ENCODE measurements at regions of chr11 and their contacts with region 1.

Region 1: DNA sequence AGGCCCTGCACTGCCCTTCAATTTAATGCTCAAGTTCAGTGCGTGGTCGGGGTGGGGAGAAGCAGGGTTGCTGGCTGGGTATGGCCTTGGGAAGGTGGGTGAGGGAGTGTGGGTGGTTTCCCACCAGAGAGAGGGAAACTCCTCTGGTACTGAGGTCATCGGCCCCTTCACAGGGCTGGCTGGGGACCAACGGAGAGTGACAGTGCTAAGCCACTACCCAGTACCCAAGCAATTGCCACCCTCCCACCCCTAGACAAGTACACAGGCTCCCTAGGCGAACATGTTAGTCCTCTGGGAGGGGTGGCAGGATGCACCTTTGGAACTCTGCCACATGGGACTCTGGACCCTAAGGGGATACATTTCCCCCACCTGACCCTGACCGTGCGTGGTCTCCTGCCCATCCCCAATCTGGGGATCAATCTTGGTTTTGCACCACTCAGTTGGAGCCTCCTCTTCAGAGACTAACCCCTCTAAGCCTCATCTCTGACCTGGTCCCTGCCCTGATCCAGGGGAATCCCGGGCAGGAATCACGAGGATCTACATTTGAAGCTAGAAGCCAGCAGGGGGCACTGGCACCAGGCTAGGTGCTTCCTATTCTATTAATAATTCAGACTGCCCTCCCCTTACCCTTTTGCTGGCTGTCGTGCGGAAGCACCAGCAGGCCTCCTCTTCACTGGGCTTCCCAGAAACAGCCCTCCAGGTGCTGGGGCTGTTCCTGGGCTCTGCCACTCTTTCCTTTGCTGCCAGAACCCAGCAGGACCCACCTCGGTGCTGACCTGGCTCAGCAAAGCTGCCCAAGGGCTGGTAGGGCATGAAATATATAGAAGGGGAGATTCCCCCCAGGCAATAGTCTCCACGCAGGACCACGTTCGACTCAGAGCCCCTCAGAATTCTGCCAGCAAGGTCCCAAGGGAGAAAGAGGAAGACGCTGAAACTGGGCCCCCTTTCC is 377.7 kb downstream of the TENM4 start:
- DNase-seq: no peak
- ATAC-seq: peak in 3 of 4 donors; percentile 60 to 67 (median 61)
- H3K4me3 ChIP-seq: no peak overlapping the region
- H3K27ac ChIP-seq: no peak overlapping the region
- H3K4me1 ChIP-seq: peaks cover 0 to 3% (median 0%) of the 10 kb centered on the region in 12 donors
- H3K27me3 ChIP-seq: no peaks in the 10 kb centered on the region
- CTCF ChIP-seq: peak; percentile 10 to 56 (median 34)
- POLR2A ChIP-seq: no peak

Region 2: GRCh38 chr11:78961247-78961646 is 101.8 kb before region 1 on chr11:
- intact Hi-C with region 1: no loop called
- DNase-seq: peak in 1 of 5 donors; percentile 22
- ATAC-seq: peak in 3 of 4 donors; percentile 56 to 82 (median 68)
- H3K4me3 ChIP-seq: no peak overlapping the region
- H3K27ac ChIP-seq: no peak overlapping the region
- H3K4me1 ChIP-seq: peaks cover 0 to 10% (median under 1%) of the 10 kb centered on the region in 12 donors
- H3K27me3 ChIP-seq: peaks cover 0 to 29% (median 7%) of the 10 kb centered on the region in 9 donors
- CTCF ChIP-seq: peak in 10 of 12 donors; percentile 18 to 55 (median 43)
- POLR2A ChIP-seq: no peak

Region 3: DNA sequence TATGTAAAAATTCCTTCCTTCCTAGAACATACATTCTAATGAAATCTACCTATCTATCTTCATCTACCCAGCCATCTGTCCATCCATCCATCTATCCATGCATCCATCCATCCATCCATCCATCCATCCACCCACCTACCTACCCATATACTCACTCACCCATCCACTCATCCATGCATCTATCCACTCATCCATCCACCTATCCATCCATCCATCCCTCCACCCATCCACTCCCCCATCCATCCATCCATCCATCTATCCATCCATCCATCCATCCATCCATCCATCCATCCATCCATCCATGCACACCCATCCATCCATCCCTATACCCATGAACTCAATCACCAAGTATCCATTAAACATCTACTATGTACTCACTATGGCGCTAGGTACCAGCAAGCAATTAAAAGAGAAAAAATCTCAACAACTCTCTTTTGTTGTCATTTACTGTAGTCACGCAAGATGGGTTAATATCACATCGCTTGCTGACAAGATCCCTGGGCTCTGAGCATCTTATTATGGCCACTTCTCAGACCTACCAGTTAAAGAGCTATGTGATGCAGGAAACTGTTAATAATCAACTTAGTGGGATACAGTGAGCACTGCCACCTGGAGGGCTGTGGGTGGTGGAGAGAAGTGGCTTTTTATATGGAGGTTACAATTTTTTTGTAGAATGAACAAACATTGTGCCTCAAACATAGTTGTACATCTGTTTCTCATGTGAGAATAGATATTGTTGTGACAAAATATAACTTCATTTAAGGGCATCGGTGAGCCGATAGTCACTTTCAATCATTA is 196.5 kb after region 1 on chr11:
- intact Hi-C with region 1: loop called in 1 of 10 experiments (anchors 10 kb)
- DNase-seq: no peak
- ATAC-seq: no peak
- H3K4me3 ChIP-seq: no peak overlapping the region
- H3K27ac ChIP-seq: no peak overlapping the region
- H3K4me1 ChIP-seq: no peaks in the 10 kb centered on the region
- H3K27me3 ChIP-seq: peaks cover 0 to 2% (median 0%) of the 10 kb centered on the region in 9 donors
- CTCF ChIP-seq: peak in 5 of 12 donors; percentile 9 to 42 (median 25)
- POLR2A ChIP-seq: no peak

Measured in heart left ventricle (tissue), 16 donors.